Psoas muscle (tissue), 8 donors: ENCODE measurements at regions of chr6 and their contacts with region 1.

Region 1: GRCh38 chr6:18465410-18466154 is 78.4 kb downstream of the RNF144B start:
- DNase-seq: no peak
- ATAC-seq: peak; percentile 68 to 86 (median 78)
- H3K4me3 ChIP-seq: no peak overlapping the region
- H3K27ac ChIP-seq: peak overlapping the region; percentile 53
- H3K4me1 ChIP-seq: peaks cover 46% of the 10 kb centered on the region
- H3K27me3 ChIP-seq: no peaks in the 10 kb centered on the region
- CTCF ChIP-seq: no peak

Region 2: DNA sequence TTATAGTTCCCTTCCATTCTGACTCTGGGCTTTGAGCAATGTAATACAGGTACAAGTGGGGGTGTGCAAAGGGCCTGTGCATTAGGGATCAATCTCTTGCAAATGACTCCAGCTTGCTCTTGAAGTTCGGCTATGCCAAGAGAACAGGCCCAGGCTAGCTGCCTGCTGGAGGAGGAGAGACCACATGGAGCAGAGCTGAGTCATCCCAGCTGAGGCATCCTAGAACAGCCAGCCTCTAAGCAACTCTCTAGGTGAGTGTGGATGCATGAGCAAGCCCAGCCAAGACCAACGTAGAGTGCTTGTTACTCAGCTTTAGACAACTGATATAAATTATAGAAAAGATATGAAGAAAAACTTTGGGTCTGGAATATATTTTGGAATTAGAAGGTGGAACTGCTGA is 1232.1 kb before region 1 on chr6:
- intact Hi-C with region 1: loop called in 1 of 2 experiments (anchors 10 kb)
- DNase-seq: no peak
- ATAC-seq: peak in 3 of 4 donors; percentile 43 to 60 (median 56)
- H3K4me3 ChIP-seq: no peak overlapping the region
- H3K27ac ChIP-seq: no peak overlapping the region
- H3K4me1 ChIP-seq: no peaks in the 10 kb centered on the region
- H3K27me3 ChIP-seq: no peaks in the 10 kb centered on the region
- CTCF ChIP-seq: no peak